Activated CD4-positive, alpha-beta T cell treated with anti-CD3 and anti-CD28 coated beads for 36 hours (primary cell): ENCODE measurements at regions of chr20 and their contacts with region 1.

Region 1: GRCh38 chr20:24662752-24663365 is 193.4 kb downstream of the SYNDIG1 start:
- DNase-seq: no peak
- ATAC-seq: no peak
- H3K4me3 Mint-ChIP-seq: no peak overlapping the region
- H3K27ac Mint-ChIP-seq: no peak overlapping the region
- H3K4me1 Mint-ChIP-seq: no peaks in the 10 kb centered on the region
- H3K27me3 Mint-ChIP-seq: no peaks in the 10 kb centered on the region

Region 2: DNA sequence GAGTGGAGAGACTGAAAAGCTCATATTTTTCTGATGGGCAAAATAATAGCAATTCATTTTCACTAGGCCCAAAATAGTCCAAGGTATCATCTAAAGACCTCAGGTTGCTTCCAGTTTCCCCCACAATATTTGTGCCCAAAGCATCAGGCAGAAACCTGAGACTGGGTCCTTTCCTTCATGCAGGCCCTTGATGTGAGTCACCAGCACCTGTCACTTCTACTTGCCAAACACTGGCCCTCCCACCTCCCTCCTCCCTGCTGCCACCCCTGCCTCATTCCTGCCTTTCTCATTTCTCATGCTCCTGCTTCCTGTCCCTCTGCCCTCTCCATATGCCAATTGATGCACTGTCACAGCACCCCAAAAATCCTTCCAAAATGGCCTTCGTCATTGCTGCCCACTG is 55.8 kb after region 1 on chr20:
- CTCF ChIA-PET with region 1: no interaction called
- POLR2A ChIA-PET with region 1: no interaction called
- intact Hi-C with region 1: loop called in 1 of 2 experiments (anchors 10 kb)
- DNase-seq: no peak
- ATAC-seq: no peak
- H3K4me3 Mint-ChIP-seq: no peak overlapping the region
- H3K27ac Mint-ChIP-seq: no peak overlapping the region
- H3K4me1 Mint-ChIP-seq: no peaks in the 10 kb centered on the region
- H3K27me3 Mint-ChIP-seq: peaks cover 8% of the 10 kb centered on the region

Region 3: GRCh38 chr20:24808616-24809015 is 145.8 kb after region 1 on chr20:
- CTCF ChIA-PET with region 1: no interaction called
- POLR2A ChIA-PET with region 1: no interaction called
- intact Hi-C with region 1: loop called in 1 of 2 experiments (anchors 10 kb)
- DNase-seq: no peak
- ATAC-seq: no peak
- H3K4me3 Mint-ChIP-seq: no peak overlapping the region
- H3K27ac Mint-ChIP-seq: no peak overlapping the region
- H3K4me1 Mint-ChIP-seq: no peaks in the 10 kb centered on the region
- H3K27me3 Mint-ChIP-seq: no peaks in the 10 kb centered on the region